ENCODE measurements at regions of chr11 and their contacts with region 1.

Region 1: DNA sequence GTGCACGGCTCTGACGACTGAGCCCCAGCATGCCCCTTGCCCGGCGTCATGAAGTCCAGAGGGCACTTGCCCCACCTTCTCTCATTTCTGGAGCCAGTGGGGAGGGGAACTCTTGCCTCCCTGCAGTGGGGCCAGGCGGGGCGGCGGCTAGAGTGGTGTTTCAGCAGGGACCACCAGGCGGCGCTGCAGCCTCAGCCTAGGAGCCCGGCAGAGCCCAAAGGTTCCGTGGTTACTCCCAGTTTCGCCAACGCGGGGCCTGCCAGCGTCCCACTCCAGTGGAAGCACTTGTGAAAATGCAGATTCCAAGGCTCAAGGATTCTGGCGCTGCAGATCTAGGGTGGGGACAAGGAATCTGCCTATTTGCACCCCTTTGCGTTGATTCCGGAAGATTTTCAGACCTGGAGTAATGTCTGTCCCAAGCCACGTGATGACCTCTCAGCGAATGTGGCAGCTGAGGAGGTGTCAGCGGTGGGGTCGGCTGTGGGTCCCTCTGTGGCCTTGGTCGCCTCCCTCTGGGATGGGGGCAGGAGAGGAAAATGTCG is 55.7 kb downstream of the CD82 start:
- DNase-seq: peak; percentile 92
- H3K4me3 ChIP-seq: peak overlapping the region in 1 of 2 experiments; percentile 26; a peak in 1 of 4 replicates
- H3K27ac ChIP-seq: no peak overlapping the region
- H3K4me1 ChIP-seq: peaks cover 0 to 28% of the 10 kb centered on the region in 2 experiments; a peak in 1 of 4 replicates
- H3K27me3 ChIP-seq: no peaks in the 10 kb centered on the region
- CTCF ChIP-seq: peak; percentile 94
- EP300 ChIP-seq: no peak
- RAD21 ChIP-seq: peak; percentile 98

Region 2: DNA sequence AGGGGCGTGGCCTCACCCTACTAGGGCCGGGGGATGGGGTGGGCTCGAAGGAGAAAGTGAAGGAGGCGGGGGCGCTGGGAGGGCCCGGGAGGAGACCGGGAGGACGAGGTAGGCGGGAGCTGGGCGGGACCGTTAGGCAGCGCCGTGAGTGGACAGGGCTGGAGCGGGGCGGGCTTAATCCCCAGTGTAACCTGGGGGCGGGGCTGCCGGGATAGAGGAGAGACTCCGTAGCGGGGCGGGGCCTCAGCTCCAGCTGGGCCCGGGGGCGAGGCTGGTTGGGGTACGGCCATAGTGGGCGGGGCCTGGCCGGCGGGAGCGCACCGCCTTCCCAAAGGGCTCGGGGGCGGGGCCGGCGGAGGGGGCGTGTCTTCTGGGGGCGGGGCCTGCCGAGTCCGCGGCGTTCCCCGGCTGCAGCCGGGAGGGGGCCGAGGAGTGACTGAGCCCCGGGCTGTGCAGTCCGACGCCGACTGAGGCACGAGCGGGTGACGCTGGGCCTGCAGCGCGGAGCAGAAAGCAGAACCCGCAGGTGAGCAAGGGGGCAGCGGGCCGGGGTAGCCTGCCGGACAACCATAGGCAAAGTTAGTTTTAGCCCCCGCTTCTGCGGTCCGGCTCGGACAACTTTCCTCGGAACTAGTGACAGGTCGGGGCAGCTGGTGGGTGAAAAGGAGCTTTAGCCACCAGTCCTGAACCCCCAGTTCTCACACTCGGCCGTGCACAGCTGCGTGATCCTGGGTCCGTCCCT is 55.8 kb before region 1 on chr11 and contains the start of gene CD82:
- CTCF ChIA-PET with region 1: interaction called, 610 read pairs
- POLR2A ChIA-PET with region 1: no interaction called
- DNase-seq: peak; percentile 99
- H3K4me3 ChIP-seq: peak within 1 kb of the TSS; percentile 58 to 71
- H3K27ac ChIP-seq: peak within 1 kb of the TSS; percentile 89
- H3K4me1 ChIP-seq: peaks cover 27 to 34% of the 10 kb centered on the region in 2 experiments
- H3K27me3 ChIP-seq: no peaks in the 10 kb centered on the region
- CTCF ChIP-seq: peak; percentile 22; the same call in 1 of the 2 replicates
- EP300 ChIP-seq: no peak
- RAD21 ChIP-seq: no peak
- polyA plus RNA-seq, gene CD82: 35.6 and 39.2 TPM in 2 replicates

Region 3: DNA sequence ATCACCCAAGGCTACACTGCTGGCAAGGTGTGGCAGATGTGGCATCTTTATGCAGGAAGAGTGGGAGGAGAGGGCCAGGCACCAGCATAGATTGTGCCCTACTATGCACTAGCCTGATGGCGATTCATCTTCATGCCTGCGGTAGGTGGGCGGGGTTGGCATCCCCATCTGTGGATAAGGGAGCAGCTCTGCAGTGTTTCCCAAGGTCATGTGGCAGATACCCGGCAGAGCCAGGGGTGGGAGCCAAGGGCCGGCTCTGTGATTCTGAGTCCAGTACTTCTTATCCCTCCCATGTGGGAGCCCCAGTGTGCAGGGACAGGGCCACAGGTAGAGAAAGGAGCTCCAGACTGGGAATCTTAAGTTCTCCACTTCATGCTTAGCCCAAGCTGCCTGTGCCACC is 35.8 kb before region 1 on chr11:
- CTCF ChIA-PET with region 1: interaction called, 20 read pairs
- POLR2A ChIA-PET with region 1: no interaction called
- DNase-seq: no peak
- H3K4me3 ChIP-seq: no peak overlapping the region
- H3K27ac ChIP-seq: no peak overlapping the region
- H3K4me1 ChIP-seq: peaks cover 0 to 16% of the 10 kb centered on the region in 2 experiments; a peak in 1 of 4 replicates
- H3K27me3 ChIP-seq: no peaks in the 10 kb centered on the region
- CTCF ChIP-seq: no peak
- EP300 ChIP-seq: no peak
- RAD21 ChIP-seq: no peak

Region 4: DNA sequence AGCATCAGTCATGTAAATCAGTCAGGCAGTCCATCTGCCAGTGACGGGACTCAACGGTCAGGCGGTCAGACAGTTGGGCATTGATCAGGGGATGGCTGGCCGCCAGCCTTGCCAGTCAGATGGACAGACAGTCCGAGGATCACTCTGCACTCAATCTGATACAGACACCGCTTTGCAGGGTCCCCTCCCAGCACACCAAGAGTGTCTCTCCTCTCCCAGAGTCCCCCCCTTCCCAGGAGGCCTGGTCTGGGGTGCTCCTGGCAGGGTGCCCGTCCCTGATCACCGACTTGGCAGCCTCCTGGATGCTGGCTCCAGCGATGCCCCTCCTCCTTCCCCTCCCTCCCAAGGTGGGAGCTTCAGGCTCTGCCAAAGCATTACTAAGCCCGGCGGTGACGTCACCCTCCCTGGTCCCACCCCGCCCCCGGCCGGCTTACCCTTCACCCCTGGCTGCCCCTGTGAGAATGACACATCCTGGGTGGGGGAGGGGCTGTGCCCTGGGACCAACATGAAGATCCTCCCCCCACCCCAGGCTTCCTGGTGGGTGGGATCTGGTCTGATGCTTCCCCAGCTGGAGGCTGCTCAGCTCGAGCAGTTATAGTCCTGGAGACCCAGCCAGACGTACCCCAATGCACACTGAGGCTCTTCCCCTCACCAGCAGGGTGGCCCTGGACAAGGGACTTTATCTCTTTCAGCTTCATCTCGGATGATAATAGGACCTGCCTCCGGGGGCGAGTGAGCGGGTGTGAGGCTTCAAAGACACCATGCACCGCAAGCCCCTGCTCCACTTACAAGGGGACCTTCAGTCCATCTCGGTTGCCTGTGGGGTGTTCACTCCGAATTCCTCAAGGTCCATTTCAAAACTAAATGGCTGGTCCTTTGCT is 13.4 kb after region 1 on chr11:
- CTCF ChIA-PET with region 1: interaction called, 19 read pairs
- POLR2A ChIA-PET with region 1: no interaction called
- DNase-seq: peak; percentile 90
- H3K4me3 ChIP-seq: peak overlapping the region; percentile 1 to 10; a peak in 1 of 4 replicates
- H3K27ac ChIP-seq: peak overlapping the region in 1 of 2 experiments; percentile 80; a peak in 2 of 4 replicates
- H3K4me1 ChIP-seq: peaks cover 5 to 20% of the 10 kb centered on the region in 2 experiments; a peak in 2 of 4 replicates
- H3K27me3 ChIP-seq: peaks cover 3% of the 10 kb centered on the region; the same call in 1 of the 2 replicates
- CTCF ChIP-seq: no peak
- EP300 ChIP-seq: no peak; a peak in 1 of 4 replicates
- RAD21 ChIP-seq: no peak; the same call in 1 of the 2 replicates

Region 5: DNA sequence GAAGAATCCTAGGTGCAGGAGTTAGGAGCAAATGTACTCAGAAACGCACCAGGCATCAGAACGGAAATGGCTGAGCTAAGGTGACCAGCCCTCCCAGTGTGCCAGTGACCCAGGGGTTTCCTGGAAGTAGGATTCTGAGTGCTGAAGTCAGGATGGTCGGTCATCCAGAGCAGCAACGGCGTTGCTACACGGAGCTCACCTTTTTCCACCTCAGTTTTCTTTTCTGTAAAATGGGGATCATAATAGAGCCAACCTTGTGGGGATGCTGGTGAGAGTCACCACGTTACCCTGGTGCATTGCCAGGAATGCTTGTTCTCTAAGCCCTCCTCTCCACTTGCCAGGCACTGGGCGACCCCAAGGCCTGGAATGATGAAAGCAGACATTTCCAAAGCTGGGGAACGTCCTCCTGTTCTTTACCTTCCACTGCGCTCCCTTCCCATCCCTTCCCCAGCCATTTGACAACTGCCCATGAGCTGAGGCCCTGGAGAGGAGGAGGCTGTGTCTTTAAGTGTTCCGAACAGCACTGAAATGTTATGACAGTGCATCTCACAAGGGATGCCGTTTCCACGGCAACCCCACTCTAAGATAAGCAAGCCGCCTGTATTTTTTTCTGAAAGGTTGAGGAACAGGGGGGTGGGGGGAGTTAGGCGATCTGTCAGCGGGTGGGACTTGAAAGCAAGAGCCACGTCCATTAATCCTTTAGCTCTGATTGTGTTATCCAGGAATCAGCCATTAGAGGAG is 172.3 kb after region 1 on chr11:
- CTCF ChIA-PET with region 1: interaction called, 18 read pairs
- POLR2A ChIA-PET with region 1: no interaction called
- DNase-seq: peak; percentile 76
- H3K4me3 ChIP-seq: no peak overlapping the region
- H3K27ac ChIP-seq: peak overlapping the region in 1 of 2 experiments; percentile 41; a peak in 2 of 4 replicates
- H3K4me1 ChIP-seq: peaks cover 12 to 46% of the 10 kb centered on the region in 2 experiments; a peak in 2 of 4 replicates
- H3K27me3 ChIP-seq: peaks cover 7% of the 10 kb centered on the region; the same call in 1 of the 2 replicates
- CTCF ChIP-seq: no peak
- EP300 ChIP-seq: no peak
- RAD21 ChIP-seq: no peak

Region 6: GRCh38 chr11:44911029-44911814 is 290.0 kb after region 1 on chr11:
- CTCF ChIA-PET with region 1: interaction called, 155 read pairs
- POLR2A ChIA-PET with region 1: no interaction called
- DNase-seq: peak; percentile 83
- H3K4me3 ChIP-seq: no peak overlapping the region; a peak in 1 of 4 replicates
- H3K27ac ChIP-seq: no peak overlapping the region; a peak in 1 of 4 replicates
- H3K4me1 ChIP-seq: peaks cover 0 to 10% of the 10 kb centered on the region in 2 experiments; a peak in 1 of 4 replicates
- H3K27me3 ChIP-seq: 0 out of 2 replicates have a peak, but pooled peaks cover 5% of the 10 kb centered on the region
- CTCF ChIP-seq: peak; percentile 87
- EP300 ChIP-seq: no peak
- RAD21 ChIP-seq: peak; percentile 83

Region 7: DNA sequence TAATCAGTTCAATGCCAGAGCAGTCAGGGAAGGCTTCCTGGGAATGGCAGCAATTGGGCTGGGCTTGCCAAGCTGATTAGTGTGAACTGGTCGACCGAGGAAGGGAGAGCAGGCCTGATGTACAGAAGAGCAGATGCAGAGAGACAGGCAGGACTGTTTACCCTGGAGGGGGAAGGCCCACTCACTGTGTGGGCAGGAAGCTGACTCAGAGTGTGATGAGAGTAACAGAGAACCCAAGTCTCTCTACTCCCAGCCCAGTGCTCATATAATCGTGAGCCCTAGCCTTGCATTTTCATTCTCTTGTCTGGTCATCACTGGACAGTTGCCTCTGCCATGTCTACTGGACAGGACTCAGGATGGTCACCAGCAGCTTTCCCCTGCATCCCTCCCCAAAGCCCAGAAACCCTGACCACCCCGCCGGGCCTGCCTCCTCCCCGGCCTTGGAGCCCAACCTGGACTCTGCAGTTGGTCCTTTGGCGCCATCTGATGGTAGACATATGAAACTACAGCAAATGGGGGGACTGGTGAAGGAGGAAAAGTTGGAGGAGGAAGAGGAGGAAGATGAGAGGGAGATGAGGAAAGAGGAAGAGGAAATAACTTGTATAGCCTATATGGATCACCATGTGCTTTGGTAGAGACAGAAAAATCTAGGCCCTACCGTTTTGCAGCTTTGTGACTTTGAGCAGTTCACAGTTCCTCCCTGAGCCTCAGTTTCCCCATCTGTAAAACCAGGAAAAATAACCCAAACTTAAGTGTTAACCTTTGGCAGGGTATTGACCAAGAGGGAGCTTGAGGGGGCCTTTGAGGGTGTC is 481.8 kb after region 1 on chr11:
- CTCF ChIA-PET with region 1: interaction called, 11 read pairs
- POLR2A ChIA-PET with region 1: interaction called, 3 read pairs
- DNase-seq: peak; percentile 87
- H3K4me3 ChIP-seq: peak overlapping the region in 1 of 2 experiments; percentile 49; a peak in 2 of 4 replicates
- H3K27ac ChIP-seq: peak overlapping the region in 1 of 2 experiments; percentile 26; a peak in 1 of 4 replicates
- H3K4me1 ChIP-seq: peaks cover 0 to 4% of the 10 kb centered on the region in 2 experiments; a peak in 2 of 4 replicates
- H3K27me3 ChIP-seq: peaks cover 21% of the 10 kb centered on the region; the same call in 1 of the 2 replicates
- CTCF ChIP-seq: peak; percentile 98
- EP300 ChIP-seq: no peak; a peak in 1 of 4 replicates
- RAD21 ChIP-seq: peak; percentile 97